ENCODE measurements at regions of chr2 and their contacts with region 1.

Region 1: DNA sequence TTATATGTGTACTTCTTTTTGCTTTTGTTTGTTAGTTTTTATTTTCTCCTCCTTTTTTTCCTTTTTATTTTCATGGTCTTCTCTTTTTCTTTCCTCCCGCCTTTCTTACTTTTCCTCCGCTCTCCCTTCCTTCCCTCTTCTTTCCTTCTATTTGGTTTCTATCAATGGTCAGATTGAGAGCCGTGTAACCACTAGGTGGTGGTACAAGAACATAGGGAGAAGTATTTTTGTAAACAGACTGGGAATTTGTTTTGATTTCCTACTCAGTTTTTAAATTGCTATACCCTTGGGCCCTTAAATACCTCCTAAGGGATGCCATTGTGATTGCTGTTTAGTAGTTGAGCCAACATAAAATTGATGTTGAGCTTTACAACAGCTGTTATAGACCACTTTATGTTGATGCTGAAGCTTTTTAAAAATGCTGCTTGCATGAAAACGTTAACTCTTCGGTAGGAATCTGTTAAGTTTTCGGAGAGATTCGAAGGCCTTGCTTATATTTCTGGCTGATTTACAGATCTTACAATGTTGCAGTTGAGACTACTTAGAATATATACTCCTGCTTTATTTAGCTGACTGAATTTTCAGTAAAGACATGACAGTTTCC is 124.2 kb downstream of the UBE2E3 start:
- DNase-seq: no peak
- ATAC-seq: peak; percentile 59
- H3K4me3 ChIP-seq: no peak overlapping the region
- H3K27ac ChIP-seq: no peak overlapping the region
- H3K4me1 ChIP-seq: peaks cover 5% of the 10 kb centered on the region
- H3K27me3 ChIP-seq: no peaks in the 10 kb centered on the region
- CTCF ChIP-seq: peak; percentile 67

Region 2: DNA sequence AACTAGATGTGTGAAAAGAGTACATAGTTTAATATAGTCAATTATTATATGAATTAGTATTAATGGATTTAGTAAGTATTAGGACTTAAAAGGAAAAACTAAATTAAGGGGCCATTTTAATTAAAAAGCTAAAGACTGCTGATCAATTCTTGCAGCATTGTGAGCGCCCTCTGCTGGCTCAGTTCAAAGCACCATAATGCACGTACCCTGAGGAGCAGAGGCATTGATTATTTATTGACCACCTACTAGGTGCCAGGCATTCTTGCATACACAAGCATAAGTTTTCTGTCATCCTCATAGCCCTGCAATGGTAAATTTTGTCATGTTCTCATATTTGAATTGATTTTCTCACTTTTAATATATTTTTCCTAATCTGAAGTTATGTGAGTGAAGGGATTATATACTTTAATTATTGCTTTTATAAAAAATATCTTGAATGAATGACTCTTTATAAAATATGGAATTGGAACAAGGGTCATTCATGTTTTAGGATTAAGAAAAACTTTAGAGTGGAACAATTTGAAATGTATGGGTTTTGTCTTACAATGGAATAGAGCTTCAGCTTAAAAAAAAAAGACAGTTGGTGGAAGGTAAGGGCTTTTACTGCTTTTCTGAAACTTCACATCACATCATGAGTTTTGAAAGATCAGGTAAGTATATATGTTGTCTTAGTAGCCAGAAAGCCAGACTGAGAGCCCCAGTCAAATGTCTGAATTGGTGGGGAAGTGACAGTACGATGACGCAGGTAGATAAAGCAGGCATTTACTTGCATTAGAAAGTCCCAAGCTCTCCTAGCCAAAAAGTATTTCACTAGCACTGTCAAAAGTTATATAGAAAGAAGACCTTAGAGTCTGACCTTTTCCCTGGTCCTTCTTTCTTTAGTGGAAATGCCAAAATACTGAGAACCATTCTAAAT is 362.3 kb after region 1 on chr2:
- intact Hi-C with region 1: loop called (anchors 10 kb)
- DNase-seq: peak; percentile 75
- ATAC-seq: peak; percentile 59
- H3K4me3 ChIP-seq: no peak overlapping the region
- H3K27ac ChIP-seq: no peak overlapping the region
- H3K4me1 ChIP-seq: peaks cover 8% of the 10 kb centered on the region
- H3K27me3 ChIP-seq: no peaks in the 10 kb centered on the region
- CTCF ChIP-seq: peak; percentile 83